H1 (cell line): ENCODE measurements at regions of chr19 and their contacts with region 1.

Region 1: GRCh38 chr19:11482384-11483050 is 1.7 kb upstream of the ELAVL3 start:
- DNase-seq: peak; percentile 53 to 95
- H3K4me3 ChIP-seq: peak overlapping the region; percentile 0 to 56 (median 9); a peak in 2 of 8 replicates
- H3K27ac ChIP-seq: no peak overlapping the region
- H3K4me1 ChIP-seq: peaks cover 0 to 17% (median 5%) of the 10 kb centered on the region in 4 experiments; a peak in 5 of 7 replicates
- H3K27me3 ChIP-seq: peaks cover 20 to 26% (median 23%) of the 10 kb centered on the region in 4 experiments
- CTCF ChIP-seq: peak; percentile 93 to 97 (median 96)
- EP300 ChIP-seq: peak in 1 of 2 experiments; percentile 53; a peak in 1 of 3 replicates
- POLR2A ChIP-seq: 0 out of 3 replicates have a peak, but pooled peaks of 1 of the 2 experiments have one; percentile 17
- RAD21 ChIP-seq: peak; percentile 86 to 87

Region 2: GRCh38 chr19:11422163-11423021 is 60.1 kb before region 1 on chr19:
- CTCF ChIA-PET with region 1: interaction called, 6 read pairs
- POLR2A ChIA-PET with region 1: interaction called, 11 read pairs
- DNase-seq: peak; percentile 88 to 99
- H3K4me3 ChIP-seq: peak overlapping the region; percentile 37 to 76 (median 53)
- H3K27ac ChIP-seq: no peak overlapping the region
- H3K4me1 ChIP-seq: peaks cover 0 to 14% (median 12%) of the 10 kb centered on the region in 4 experiments; a peak in 5 of 7 replicates
- H3K27me3 ChIP-seq: peaks cover 2 to 28% (median 21%) of the 10 kb centered on the region in 4 experiments
- CTCF ChIP-seq: no peak
- EP300 ChIP-seq: no peak
- POLR2A ChIP-seq: peak in 1 of 2 experiments; percentile 60; a peak in 2 of 3 replicates
- RAD21 ChIP-seq: no peak

Region 3: DNA sequence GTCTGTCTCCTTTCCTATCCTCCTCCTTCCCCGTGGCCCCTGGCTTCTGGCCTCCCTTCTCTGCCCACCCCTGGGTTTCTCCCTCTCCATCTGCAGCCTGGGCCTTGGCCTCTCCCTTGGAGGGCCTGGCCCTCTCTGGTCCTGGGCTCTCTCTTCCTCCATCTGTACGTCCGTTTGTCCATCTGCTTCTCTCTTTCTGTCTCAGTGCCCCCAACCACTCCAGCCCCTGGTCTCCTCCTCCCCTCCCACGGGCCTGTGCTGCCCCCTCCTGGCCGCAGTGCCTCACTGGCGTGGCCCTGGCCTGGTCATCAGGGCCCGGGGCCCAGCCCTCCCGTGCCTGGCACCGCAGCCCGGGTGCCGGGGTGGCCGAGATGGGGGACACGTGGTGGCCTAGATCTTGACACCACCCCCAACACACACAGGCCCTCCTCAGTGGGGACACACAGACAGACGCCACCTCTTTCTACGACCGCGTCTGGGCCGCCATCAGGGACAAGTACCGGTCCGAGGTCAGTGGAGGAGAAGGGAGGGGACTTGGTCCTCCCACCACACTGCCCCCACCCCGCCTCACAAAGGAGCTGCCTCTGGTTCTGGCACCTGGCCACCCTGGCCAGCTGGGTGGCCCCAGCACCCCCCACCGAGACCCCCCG is 35.7 kb before region 1 on chr19:
- CTCF ChIA-PET with region 1: interaction called, 22 read pairs
- POLR2A ChIA-PET with region 1: interaction called, 14 read pairs
- DNase-seq: peak in 1 of 2 experiments; percentile 95
- H3K4me3 ChIP-seq: no peak overlapping the region
- H3K27ac ChIP-seq: no peak overlapping the region
- H3K4me1 ChIP-seq: peaks cover under 1 to 4% (median 2%) of the 10 kb centered on the region in 4 experiments; a peak in 6 of 7 replicates
- H3K27me3 ChIP-seq: no peaks in the 10 kb centered on the region
- CTCF ChIP-seq: peak; percentile 91 to 99 (median 91)
- EP300 ChIP-seq: no peak
- POLR2A ChIP-seq: no peak
- RAD21 ChIP-seq: peak; percentile 90 to 95

Region 4: DNA sequence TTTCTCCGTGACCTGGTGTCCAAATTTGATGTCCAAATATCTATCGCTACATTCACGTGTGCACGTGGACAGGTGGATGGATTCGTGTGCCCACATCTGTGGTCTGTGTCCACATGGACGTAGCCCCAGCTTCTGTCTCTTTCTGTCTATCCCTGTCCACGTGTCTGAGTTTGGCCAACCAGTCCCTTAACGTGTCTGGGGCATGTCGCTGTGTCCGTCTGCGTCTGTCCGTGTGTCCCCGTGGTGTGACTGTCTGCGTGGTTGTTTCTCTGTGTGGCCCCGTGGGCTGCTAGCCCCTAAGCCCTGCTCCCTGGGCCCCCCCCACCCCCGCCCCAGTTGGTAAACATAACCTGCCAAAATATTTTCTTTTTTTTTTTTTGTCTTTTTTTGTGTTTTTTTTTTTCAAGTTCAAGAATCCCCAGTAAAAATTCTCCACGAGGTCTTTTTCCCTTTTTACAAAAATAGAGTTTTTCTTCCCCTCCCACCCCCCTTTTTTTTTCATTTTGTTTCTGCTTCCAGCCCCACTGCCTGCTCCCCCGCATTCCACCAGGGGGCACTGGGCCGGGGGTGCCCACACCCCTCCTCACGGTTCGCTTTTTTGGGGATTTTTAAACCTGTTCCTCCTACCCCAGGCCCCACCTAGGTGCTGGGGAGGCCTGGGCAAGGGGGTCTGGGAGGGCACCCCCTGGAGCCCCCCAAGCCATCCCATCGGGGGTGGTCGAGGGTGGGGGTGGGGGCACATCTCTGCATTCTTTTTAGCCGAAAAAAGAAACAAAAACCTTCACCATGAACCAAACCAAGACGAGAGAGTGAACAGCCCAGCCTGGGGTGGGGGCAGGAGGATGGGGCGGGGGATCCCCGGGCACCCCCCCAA is 28.8 kb before region 1 on chr19:
- CTCF ChIA-PET with region 1: interaction called, 22 read pairs
- POLR2A ChIA-PET with region 1: interaction called, 20 read pairs
- DNase-seq: peak in 1 of 2 experiments; percentile 70
- H3K4me3 ChIP-seq: no peak overlapping the region
- H3K27ac ChIP-seq: no peak overlapping the region
- H3K4me1 ChIP-seq: peaks cover 2 to 21% (median 7%) of the 10 kb centered on the region in 4 experiments
- H3K27me3 ChIP-seq: no peaks in the 10 kb centered on the region
- CTCF ChIP-seq: peak; percentile 66 to 81 (median 69)
- EP300 ChIP-seq: no peak
- POLR2A ChIP-seq: no peak
- RAD21 ChIP-seq: peak; percentile 34 to 56; a peak in 3 of 4 replicates

Region 5: GRCh38 chr19:11460207-11460606 is 22.3 kb before region 1 on chr19:
- CTCF ChIA-PET with region 1: interaction called, 12 read pairs
- POLR2A ChIA-PET with region 1: interaction called, 20 read pairs
- DNase-seq: no peak
- H3K4me3 ChIP-seq: no peak overlapping the region
- H3K27ac ChIP-seq: no peak overlapping the region
- H3K4me1 ChIP-seq: peaks cover 3 to 12% (median 5%) of the 10 kb centered on the region in 4 experiments
- H3K27me3 ChIP-seq: no peaks in the 10 kb centered on the region
- CTCF ChIP-seq: peak; percentile 55 to 72 (median 57)
- EP300 ChIP-seq: no peak
- POLR2A ChIP-seq: no peak
- RAD21 ChIP-seq: peak in 1 of 2 experiments; percentile 37; a peak in 1 of 4 replicates

Region 6: DNA sequence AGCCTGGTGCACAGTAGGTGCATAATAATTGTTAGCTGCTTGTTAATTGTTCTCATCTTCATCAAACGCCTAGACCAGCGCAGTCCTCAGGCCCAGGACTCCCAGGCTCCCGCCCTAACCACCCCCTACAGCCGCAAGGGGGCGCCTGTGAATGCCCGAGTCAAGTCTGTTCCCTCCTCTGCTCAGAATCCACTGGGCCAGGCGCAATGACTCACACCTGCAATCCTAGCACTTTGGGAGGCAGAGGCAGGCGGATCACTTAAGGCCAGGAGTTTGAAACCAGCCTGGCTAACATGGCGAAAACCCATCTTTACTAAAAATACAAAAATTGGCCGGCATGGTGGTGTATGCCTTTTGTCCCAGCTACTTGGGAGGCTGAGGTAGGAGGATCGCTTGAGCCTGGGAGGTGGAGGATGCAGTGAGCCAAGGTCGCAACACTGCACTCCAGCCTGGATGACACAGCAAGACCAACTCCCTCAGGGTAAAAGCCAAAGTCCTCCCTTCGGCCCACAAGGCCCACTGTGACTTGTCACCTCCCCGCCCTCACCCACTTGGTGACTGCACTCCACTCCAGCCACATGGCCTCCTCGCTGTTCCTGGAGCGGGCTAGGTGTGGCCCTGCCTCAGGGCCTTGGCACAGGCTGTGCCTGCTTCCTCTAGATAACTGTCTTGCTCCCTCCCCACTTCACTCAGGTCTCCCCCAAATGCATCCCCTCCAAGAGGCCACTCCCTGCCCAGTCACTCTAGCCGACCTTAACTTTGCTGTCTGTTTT is 14.1 kb after region 1 on chr19:
- CTCF ChIA-PET with region 1: interaction called, 37 read pairs
- POLR2A ChIA-PET with region 1: interaction called, 7 read pairs
- DNase-seq: peak; percentile 57 to 96
- H3K4me3 ChIP-seq: no peak overlapping the region
- H3K27ac ChIP-seq: no peak overlapping the region
- H3K4me1 ChIP-seq: no peaks in the 10 kb centered on the region
- H3K27me3 ChIP-seq: no peaks in the 10 kb centered on the region
- CTCF ChIP-seq: peak; percentile 85 to 91 (median 89)
- EP300 ChIP-seq: no peak
- POLR2A ChIP-seq: no peak
- RAD21 ChIP-seq: peak; percentile 62 to 76